Naive thymus-derived CD4-positive, alpha-beta T cell (primary cell): ENCODE measurements at regions of chr11 and their contacts with region 1.

Region 1: GRCh38 chr11:128552783-128553661 is 34.3 kb downstream of the ETS1 start:
- DNase-seq: no peak
- ATAC-seq: peak; percentile 77
- H3K4me3 ChIP-seq: no peak overlapping the region
- H3K4me3 Mint-ChIP-seq: peak overlapping the region in 9 of 10 donors; percentile 1 to 50 (median 23)
- H3K27ac ChIP-seq: peak overlapping the region; percentile 20
- H3K27ac Mint-ChIP-seq: peak overlapping the region; percentile 27 to 99 (median 90)
- H3K4me1 ChIP-seq: peaks cover 36 to 39% of the 10 kb centered on the region in 2 donors
- H3K4me1 Mint-ChIP-seq: peaks cover 32 to 69% (median 62%) of the 10 kb centered on the region in 7 donors
- H3K27me3 ChIP-seq: no peaks in the 10 kb centered on the region
- H3K27me3 Mint-ChIP-seq: no peaks in the 10 kb centered on the region

Region 2: DNA sequence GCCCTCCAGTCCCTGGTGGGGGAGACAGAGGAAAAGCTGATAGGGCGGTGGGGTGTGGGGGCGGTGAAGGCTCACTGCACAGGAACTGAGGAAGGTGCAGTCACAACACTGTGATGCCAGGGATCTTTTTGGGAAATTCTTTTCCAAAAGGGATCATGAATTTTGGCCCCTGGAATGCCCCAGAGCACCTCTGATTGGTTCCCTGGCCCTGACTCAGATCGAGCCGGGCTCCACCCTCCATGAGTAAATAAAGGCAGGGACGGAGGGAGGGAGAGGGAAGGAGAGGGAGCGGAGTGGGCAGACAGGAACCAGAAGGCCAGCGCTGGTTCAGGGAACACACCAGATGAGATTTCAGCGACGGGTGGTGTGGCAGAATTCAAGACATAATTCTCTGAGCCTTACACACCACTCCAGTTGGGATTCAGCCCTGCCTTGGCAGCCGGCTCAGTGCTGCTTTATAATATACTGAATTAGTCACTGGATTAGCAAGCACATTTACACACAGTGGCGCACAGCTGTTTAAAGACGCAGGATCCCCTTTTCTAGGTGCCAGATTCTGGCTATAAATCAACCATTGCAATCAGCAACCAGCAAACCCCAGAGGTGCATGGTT is 45.9 kb before region 1 on chr11:
- CTCF ChIA-PET with region 1: no interaction called
- POLR2A ChIA-PET with region 1: interaction called, 27 read pairs
- intact Hi-C with region 1: no loop called
- DNase-seq: peak in 1 of 9 donors; percentile 60
- ATAC-seq: no peak
- H3K4me3 ChIP-seq: peak overlapping the region; percentile 96
- H3K4me3 Mint-ChIP-seq: peak overlapping the region; percentile 85 to 100 (median 98)
- H3K27ac ChIP-seq: peak overlapping the region; percentile 97
- H3K27ac Mint-ChIP-seq: peak overlapping the region; percentile 87 to 99 (median 97)
- H3K4me1 ChIP-seq: peaks cover 89 to 91% of the 10 kb centered on the region in 2 donors
- H3K4me1 Mint-ChIP-seq: peaks cover 70 to 98% (median 92%) of the 10 kb centered on the region in 7 donors
- H3K27me3 ChIP-seq: no peaks in the 10 kb centered on the region
- H3K27me3 Mint-ChIP-seq: no peaks in the 10 kb centered on the region

Region 3: DNA sequence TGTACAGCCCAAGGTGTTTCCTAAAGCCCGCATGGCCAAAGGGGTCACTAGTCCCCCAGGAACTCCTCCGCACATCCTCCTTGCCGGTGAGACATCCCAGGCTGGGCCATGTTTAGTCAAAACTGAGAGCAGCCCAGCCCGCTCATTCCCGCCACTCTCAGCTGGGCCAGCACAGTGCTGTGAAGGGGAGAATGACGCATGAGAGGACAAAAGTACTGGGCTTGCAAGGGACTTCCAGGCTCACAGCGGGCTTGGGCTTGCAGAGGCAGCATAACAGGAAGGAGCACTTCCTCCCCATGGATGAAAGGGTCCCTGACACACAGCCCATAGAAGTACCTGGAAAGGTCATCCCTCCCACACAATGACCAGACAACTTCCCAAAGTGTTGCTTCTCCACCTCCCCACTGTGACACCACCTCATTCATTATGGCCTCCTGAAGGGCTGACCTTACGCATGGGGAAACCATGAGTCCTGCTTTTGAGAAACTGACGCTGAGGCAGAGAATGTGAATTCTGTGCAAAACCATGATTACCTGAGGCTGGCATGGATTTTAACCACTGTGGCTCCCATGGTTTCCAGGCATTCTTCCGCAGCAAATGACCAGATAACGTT is 15.2 kb after region 1 on chr11:
- CTCF ChIA-PET with region 1: no interaction called
- POLR2A ChIA-PET with region 1: interaction called, 3 read pairs
- intact Hi-C with region 1: loop called in 1 of 2 experiments (anchors 2 kb)
- DNase-seq: no peak
- ATAC-seq: peak; percentile 55
- H3K4me3 ChIP-seq: no peak overlapping the region
- H3K4me3 Mint-ChIP-seq: peak overlapping the region in 2 of 10 donors; percentile 11 to 18
- H3K27ac ChIP-seq: no peak overlapping the region
- H3K27ac Mint-ChIP-seq: peak overlapping the region in 5 of 9 donors; percentile 5 to 71 (median 58)
- H3K4me1 ChIP-seq: peaks cover 0 to 13% of the 10 kb centered on the region in 2 donors
- H3K4me1 Mint-ChIP-seq: peaks cover 14 to 33% (median 22%) of the 10 kb centered on the region in 7 donors
- H3K27me3 ChIP-seq: no peaks in the 10 kb centered on the region
- H3K27me3 Mint-ChIP-seq: no peaks in the 10 kb centered on the region

Region 4: GRCh38 chr11:128582496-128583366 is 29.7 kb after region 1 on chr11:
- CTCF ChIA-PET with region 1: no interaction called
- POLR2A ChIA-PET with region 1: no interaction called
- intact Hi-C with region 1: loop called in 1 of 2 experiments (anchors 2 kb)
- DNase-seq: no peak
- ATAC-seq: peak; percentile 61
- H3K4me3 ChIP-seq: no peak overlapping the region
- H3K4me3 Mint-ChIP-seq: peak overlapping the region; percentile 15 to 78 (median 70)
- H3K27ac ChIP-seq: no peak overlapping the region
- H3K27ac Mint-ChIP-seq: peak overlapping the region in 7 of 9 donors; percentile 38 to 93 (median 63)
- H3K4me1 ChIP-seq: peaks cover 0 to 6% of the 10 kb centered on the region in 2 donors
- H3K4me1 Mint-ChIP-seq: peaks cover 40 to 67% (median 56%) of the 10 kb centered on the region in 7 donors
- H3K27me3 ChIP-seq: no peaks in the 10 kb centered on the region
- H3K27me3 Mint-ChIP-seq: peaks cover 0 to 21% (median 0%) of the 10 kb centered on the region in 5 donors

Region 5: GRCh38 chr11:128624269-128625175 is 71.5 kb after region 1 on chr11:
- CTCF ChIA-PET with region 1: interaction called, 5 read pairs
- POLR2A ChIA-PET with region 1: interaction called, 39 read pairs
- intact Hi-C with region 1: loop called in 1 of 2 experiments (anchors 1 kb)
- DNase-seq: peak; percentile 40 to 78 (median 66)
- ATAC-seq: peak; percentile 79
- H3K4me3 ChIP-seq: peak overlapping the region; percentile 32
- H3K4me3 Mint-ChIP-seq: peak overlapping the region; percentile 74 to 89 (median 82)
- H3K27ac ChIP-seq: peak overlapping the region; percentile 73
- H3K27ac Mint-ChIP-seq: peak overlapping the region; percentile 95 to 100 (median 98)
- H3K4me1 ChIP-seq: peaks cover 52 to 84% of the 10 kb centered on the region in 2 donors
- H3K4me1 Mint-ChIP-seq: peaks cover 82 to 100% (median 99%) of the 10 kb centered on the region in 7 donors
- H3K27me3 ChIP-seq: no peaks in the 10 kb centered on the region
- H3K27me3 Mint-ChIP-seq: no peaks in the 10 kb centered on the region